ENCODE measurements at regions of chr1 and their contacts with region 1.

Region 1: GRCh38 chr1:60160141-60160540 is 86.6 kb upstream of the C1orf87 start:
- DNase-seq: no peak
- CTCF ChIP-seq: no peak

Region 2: GRCh38 chr1:60068393-60069045 is 91.6 kb before region 1 on chr1:
- CTCF ChIA-PET with region 1: no interaction called
- POLR2A ChIA-PET with region 1: no interaction called
- DNase-seq: no peak
- CTCF ChIP-seq: no peak

Region 3: GRCh38 chr1:60171801-60172200 is 11.7 kb after region 1 on chr1:
- CTCF ChIA-PET with region 1: interaction called, 14 read pairs
- POLR2A ChIA-PET with region 1: no interaction called
- DNase-seq: no peak
- CTCF ChIP-seq: no peak

Region 4: DNA sequence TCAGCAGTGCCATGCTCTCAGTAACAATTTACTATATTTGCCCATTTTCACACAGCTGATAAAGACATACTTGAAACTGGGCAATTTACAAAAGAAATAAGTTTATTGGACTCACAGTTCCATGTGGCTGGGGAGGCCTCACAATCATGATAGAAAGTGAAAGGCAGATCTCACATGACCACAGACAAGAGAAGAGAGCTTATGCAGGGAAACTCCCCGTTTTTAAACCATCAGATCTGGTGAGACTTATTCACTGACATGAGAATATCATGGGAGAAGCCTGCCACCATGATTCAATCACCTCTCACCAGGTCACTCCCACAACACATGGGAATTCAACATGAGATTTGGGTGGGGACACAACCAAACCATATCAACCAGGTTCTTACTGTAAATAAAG is 25.5 kb after region 1 on chr1:
- CTCF ChIA-PET with region 1: no interaction called
- POLR2A ChIA-PET with region 1: no interaction called
- DNase-seq: no peak
- CTCF ChIP-seq: no peak

Region 5: GRCh38 chr1:60423146-60423780 is 263.1 kb after region 1 on chr1:
- CTCF ChIA-PET with region 1: no interaction called
- POLR2A ChIA-PET with region 1: no interaction called
- DNase-seq: no peak
- CTCF ChIP-seq: no peak

Measured in GM10248 (cell line).